ENCODE measurements at regions of chr5 and their contacts with region 1.

Region 1: DNA sequence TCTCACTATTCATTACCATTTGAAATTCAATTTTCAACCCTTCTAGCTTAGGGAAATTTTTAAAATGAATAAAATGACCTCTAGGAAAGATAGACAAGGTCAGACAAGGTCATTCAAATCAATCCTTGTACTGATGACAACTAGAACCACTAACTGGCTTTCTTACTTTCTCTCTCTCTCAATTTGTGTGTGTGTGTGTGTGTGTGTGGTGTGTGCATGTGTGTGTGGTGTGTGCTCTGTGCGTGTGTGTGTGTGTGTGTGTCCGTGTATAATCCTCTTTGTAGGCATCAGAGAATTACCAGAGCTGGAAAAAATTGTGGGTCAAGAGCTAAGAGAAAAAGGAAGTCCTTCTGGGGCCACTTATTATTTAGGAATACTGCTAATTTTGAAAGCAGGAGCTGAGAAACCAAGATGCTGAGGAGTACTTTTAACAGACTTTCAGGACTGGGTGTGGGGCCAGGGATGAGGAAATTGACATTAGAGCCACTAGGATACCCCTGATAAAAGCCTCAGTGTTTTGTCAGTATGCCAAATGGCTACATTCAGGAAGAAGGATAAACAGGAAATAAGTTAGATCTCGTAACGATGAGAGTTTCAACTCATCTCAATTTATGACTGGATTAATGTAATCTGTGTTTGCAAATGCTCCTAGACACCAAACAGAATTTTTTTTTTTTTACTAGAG is 723.3 kb downstream of the CETN3 start:
- DNase-seq: no peak
- ATAC-seq: no peak
- H3K4me3 ChIP-seq: no peak overlapping the region
- H3K27ac ChIP-seq: no peak overlapping the region
- H3K4me1 ChIP-seq: no peaks in the 10 kb centered on the region
- H3K27me3 ChIP-seq: no peaks in the 10 kb centered on the region
- CTCF ChIP-seq: no peak

Region 2: DNA sequence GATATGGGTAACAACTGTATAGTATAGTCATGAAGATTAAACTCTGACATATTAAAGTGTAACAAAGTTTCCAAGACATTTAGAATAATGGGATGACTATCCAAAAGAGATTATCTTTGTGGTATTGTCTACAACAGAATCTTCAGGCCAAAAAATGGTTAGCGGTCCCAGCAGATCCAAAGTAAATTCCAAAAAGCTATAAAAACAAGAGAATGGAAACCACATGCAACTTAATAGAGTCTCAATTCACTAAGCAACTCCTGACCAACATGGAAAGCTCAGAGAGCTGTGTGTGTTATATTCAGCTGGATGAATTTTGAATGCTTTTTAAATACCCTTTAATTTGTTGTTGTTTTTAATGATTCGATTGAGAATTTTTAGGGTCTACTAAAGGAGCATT is 35.1 kb after region 1 on chr5:
- intact Hi-C with region 1: loop called in 1 of 2 experiments (anchors 2 kb)
- DNase-seq: no peak
- ATAC-seq: no peak
- H3K4me3 ChIP-seq: no peak overlapping the region
- H3K27ac ChIP-seq: peak overlapping the region; percentile 76
- H3K4me1 ChIP-seq: peaks cover 18% of the 10 kb centered on the region
- H3K27me3 ChIP-seq: no peaks in the 10 kb centered on the region
- CTCF ChIP-seq: no peak

Region 3: DNA sequence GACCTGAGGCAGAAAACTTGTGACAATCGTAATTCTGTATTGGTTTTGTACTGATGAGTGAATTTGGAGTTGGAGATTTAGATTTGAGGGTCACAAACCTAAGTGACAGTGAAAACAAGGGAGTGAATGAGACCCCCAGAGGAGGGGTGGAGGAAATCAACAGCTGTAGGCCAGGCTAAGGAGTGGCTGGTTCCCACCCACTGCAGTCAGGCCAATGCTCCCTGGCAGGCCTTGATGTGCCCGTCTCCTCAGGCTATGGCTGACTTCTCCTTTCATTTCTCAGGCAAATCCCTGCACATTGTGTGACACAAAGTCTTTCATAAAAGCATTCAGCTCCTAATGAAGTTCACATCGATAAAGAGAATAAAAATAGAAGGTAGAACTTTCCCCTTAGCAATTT is 165.7 kb after region 1 on chr5:
- intact Hi-C with region 1: no loop called
- DNase-seq: no peak
- ATAC-seq: no peak
- H3K4me3 ChIP-seq: no peak overlapping the region
- H3K27ac ChIP-seq: no peak overlapping the region
- H3K4me1 ChIP-seq: peaks cover 10% of the 10 kb centered on the region
- H3K27me3 ChIP-seq: no peaks in the 10 kb centered on the region
- CTCF ChIP-seq: no peak

Measured in psoas muscle (tissue), 8 donors.